Dorsolateral prefrontal cortex (tissue), 120 donors: ENCODE measurements at regions of chr7 and their contacts with region 1.

Region 1: DNA sequence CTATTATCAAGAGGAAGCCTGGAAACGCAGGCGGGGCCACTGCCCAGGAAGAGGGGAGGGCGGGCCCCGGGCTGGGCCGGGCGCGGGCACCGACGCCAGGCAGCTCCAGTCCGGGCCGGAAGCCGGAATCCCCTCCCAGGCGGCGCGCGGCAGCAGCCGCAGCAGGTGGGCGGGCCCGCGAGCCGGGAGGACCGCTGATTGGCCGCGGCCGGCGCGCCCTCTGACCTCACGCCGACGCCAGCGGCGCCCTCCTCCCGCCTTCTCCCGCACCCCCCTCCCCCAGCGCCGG is 438 bp downstream of the BCL7B start:
- DNase-seq: peak; percentile 82 to 96 (median 91)
- H3K4me3 ChIP-seq: peak overlapping the region; percentile 45 to 99 (median 87)
- H3K27ac ChIP-seq: peak overlapping the region; percentile 32 to 99 (median 97)
- H3K27me3 ChIP-seq: no peaks in the 10 kb centered on the region
- CTCF ChIP-seq: peak in 12 of 56 donors; percentile 9 to 36 (median 18)

Region 2: GRCh38 chr7:73329861-73330581 is 227.0 kb before region 1 on chr7:
- intact Hi-C with region 1: no loop called
- DNase-seq: no peak
- H3K4me3 ChIP-seq: no peak overlapping the region
- H3K27ac ChIP-seq: peak overlapping the region in 2 of 59 donors; percentile 6 to 38
- H3K27me3 ChIP-seq: no peaks in the 10 kb centered on the region
- CTCF ChIP-seq: no peak

Region 3: GRCh38 chr7:73578342-73579127 is 21.5 kb after region 1 on chr7 and contains the start of gene TBL2:
- intact Hi-C with region 1: loop called in 1 of 2 experiments (anchors 1 kb)
- DNase-seq: peak; percentile 96 to 99 (median 98)
- H3K4me3 ChIP-seq: peak within 1 kb of the TSS; percentile 70 to 99 (median 90)
- H3K27ac ChIP-seq: peak within 1 kb of the TSS in 58 of 59 donors; percentile 19 to 92 (median 82)
- H3K27me3 ChIP-seq: no peaks in the 10 kb centered on the region
- CTCF ChIP-seq: peak in 41 of 56 donors; percentile 7 to 60 (median 36)
- total RNA-seq, gene TBL2: 14.3 to 32.7 (median 22.3) TPM